ENCODE measurements at regions of chr15 and their contacts with region 1.

Region 1: GRCh38 chr15:63041974-63042819 is at the start of gene TPM1:
- H3K4me3 Mint-ChIP-seq: peak within 1 kb of the TSS; percentile 84
- H3K27ac Mint-ChIP-seq: peak within 1 kb of the TSS; percentile 10
- H3K4me1 Mint-ChIP-seq: peaks cover 31% of the 10 kb centered on the region
- H3K27me3 Mint-ChIP-seq: peaks cover 82% of the 10 kb centered on the region

Region 2: DNA sequence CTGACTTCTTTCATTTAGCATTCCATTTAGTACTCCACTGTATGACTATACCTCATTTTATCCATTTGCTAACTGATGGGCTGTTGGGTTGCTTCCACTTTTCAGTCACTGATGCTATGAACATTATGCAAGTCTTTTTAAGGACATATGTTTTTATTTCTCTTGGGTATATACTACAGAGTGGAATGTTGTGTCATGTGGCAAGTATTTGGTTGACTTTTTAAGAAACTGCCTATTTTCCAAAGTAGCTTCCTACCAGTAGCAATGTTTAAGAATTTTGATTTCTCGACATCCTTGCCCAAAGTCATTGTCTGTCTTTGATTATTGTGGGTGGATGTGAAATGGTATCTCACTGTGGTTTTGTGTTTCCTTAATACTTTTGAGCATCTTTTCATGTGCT is 109.8 kb before region 1 on chr15:
- intact Hi-C with region 1: loop called (anchors 5 kb)
- H3K4me3 Mint-ChIP-seq: no peak overlapping the region
- H3K27ac Mint-ChIP-seq: peak overlapping the region; percentile 74
- H3K4me1 Mint-ChIP-seq: peaks cover 72% of the 10 kb centered on the region
- H3K27me3 Mint-ChIP-seq: no peaks in the 10 kb centered on the region

Region 3: DNA sequence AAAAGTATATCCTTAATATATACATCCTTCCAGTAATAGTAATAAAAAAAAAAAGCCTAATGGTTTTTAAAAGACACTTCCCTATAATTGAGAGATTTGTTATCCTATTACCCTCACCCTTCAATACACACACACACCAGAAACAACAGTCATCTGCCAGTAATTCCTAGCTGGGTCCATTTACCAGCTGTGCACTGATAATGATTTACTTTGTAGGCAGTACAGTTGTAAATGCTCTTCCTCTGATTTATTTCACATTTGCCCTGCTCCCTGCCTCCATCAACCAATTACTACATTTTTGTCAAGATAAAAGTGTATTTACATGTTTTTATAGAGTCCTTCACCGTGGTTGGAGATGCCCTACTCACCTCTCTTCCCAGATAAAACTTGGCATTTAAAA is 12.8 kb after region 1 on chr15:
- intact Hi-C with region 1: loop called (anchors 1 kb)
- H3K4me3 Mint-ChIP-seq: no peak overlapping the region
- H3K27ac Mint-ChIP-seq: no peak overlapping the region
- H3K4me1 Mint-ChIP-seq: peaks cover 20% of the 10 kb centered on the region
- H3K27me3 Mint-ChIP-seq: peaks cover 4% of the 10 kb centered on the region

Region 4: DNA sequence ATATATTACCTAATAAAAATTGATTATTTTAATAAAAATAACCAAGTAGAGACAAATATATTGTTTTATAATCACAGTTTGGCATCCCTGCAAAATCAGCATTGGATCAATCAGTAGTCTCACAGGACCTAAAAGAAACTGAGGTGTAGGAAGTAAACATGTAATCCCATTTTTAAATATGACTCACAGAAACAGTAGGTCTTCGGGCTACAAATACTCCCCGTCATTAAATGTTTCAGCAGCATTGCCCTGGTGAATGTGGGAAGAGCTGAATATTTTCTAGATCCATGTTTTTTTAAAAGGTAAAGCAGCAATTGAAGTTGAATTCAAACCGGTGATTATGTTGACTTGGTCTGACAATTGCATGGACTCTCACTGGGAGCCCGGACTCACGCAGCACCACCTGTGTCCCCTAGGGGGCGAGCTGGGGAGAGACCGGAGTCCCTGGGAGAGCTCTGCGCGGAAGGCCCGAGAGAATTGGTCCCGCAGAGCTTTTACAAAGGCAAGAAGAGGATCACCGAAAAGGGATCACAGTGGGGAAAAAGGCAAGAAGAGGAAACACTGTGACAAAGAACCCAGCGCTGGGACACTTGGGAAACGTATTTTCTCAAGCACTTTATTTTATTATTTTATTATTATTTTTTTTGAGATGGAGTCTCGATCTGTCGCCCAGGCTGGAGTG is 445.0 kb after region 1 on chr15:
- intact Hi-C with region 1: no loop called
- H3K4me3 Mint-ChIP-seq: peak overlapping the region; percentile 13
- H3K27ac Mint-ChIP-seq: peak overlapping the region; percentile 98
- H3K4me1 Mint-ChIP-seq: peaks cover 69% of the 10 kb centered on the region
- H3K27me3 Mint-ChIP-seq: no peaks in the 10 kb centered on the region